ENCODE measurements at regions of chr5 and their contacts with region 1.

Region 1: DNA sequence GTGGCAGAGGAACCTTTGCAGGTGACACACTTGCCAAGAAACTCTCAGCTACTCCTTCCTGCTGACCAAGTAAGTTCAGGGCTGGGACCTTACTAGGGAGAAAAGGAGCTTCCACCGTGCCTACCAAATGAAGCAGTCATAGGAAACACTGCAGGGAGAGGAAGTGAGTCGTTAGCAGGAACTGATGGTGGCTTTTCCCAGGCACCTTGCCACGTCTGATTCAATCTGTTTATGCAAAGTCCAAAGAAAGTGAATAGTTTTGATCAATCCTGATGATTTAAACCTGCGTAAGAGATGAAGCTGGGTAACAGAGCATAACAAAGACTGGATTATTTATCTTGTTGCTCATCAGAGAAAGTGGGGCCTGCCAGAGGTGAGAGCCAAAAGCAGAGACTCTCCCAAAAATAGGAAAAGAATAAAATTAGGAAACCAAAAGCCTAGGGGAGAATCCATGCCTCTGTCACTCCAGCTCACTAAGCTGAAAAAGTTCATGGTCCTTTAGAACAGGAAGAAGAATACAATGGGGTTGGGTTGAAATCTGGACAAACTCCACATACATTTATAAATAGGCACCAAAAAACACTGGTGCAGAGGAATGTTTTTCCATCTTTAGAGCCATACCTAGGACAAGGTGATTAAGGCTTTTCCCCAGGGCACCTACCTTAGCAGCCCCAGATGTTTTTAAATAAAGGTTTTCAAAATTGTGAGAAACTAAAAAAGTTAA is 9.3 kb upstream of the PFDN1 start:
- DNase-seq: no peak
- H3K4me3 ChIP-seq: no peak overlapping the region
- H3K27ac ChIP-seq: peak overlapping the region; percentile 74
- H3K4me1 ChIP-seq: peaks cover 34% of the 10 kb centered on the region
- H3K27me3 ChIP-seq: no peaks in the 10 kb centered on the region
- CTCF ChIP-seq: no peak

Region 2: DNA sequence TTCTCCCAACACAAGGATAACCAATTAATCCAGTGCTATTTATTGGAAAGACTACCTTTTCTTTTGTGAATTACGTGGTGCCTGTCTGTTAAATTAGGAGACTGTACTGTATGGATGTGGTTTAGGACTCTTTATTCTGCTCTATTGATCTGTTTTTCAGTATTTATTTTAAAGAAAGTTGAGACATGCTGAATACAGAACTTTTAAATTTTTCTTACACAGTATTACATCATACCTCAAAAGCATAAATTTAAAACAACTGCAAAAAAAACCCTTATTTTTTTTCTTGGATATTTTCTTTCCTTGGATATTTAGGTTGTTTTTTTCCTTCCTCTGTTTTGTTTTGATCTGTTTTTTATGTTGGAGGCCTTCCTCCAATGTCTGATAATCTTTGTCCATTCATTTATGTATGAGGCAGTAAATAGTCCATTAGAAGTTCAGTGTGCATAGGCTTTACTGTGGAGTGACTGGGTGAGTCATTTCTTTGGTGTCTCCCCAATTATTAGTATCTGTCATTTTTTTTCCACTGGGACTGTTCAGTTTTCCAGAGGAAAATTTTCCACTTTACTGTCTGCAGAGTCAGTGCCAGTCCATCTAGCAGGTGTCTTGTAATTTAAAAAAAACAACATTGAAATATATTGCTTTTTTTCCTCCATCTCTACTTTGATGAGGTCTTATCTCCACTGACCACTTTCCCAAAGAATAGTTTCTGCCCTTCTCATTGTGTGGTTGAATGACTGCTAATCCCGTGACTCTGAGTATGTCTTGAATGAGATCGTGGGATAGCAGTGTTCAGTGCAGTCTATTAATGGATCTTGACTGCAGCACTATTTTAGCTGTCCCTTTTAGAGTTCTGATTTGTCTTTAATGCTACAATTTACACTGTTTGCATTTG is 122.0 kb before region 1 on chr5:
- dilution Hi-C with region 1: no loop called
- DNase-seq: no peak
- H3K4me3 ChIP-seq: no peak overlapping the region
- H3K27ac ChIP-seq: no peak overlapping the region
- H3K4me1 ChIP-seq: peaks cover 9% of the 10 kb centered on the region
- H3K27me3 ChIP-seq: no peaks in the 10 kb centered on the region
- CTCF ChIP-seq: no peak

Region 3: DNA sequence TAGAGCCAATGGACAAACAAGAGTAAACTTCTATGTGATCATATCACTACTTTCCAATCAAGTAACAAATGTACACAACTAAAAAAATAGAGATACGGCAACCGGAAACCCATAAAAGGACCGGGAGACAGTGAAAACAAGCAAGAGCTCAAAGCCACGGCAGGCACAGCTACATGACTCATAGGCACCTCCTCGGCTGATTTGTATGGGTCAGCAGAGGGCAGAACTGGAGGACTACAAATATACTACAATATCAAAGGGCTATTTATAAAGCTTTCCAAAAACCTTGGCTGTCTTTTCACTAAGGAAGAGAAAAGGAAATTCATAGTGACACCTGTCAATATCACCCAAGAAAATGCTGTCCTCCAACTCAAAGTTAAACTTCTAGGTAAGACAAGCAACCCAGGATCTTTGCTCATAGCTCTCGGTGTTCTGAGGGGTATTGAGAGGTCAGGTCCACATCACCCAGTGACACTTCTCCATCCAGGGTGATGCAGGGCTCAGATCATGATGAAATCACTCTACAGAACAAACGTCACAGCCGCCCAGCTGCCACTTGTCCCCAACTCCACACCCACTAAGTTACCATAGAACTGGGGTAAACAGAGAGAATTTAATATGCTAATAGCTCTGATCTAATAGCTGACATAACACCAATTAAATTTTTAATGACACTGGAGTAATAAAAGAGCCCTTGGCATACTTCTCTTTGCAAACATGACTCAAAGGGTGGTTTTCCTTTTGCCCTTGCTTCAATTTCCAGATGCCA is 50.6 kb before region 1 on chr5:
- dilution Hi-C with region 1: loop called (anchors 10 kb)
- DNase-seq: no peak
- H3K4me3 ChIP-seq: peak overlapping the region in 1 of 3 experiments; percentile 43
- H3K27ac ChIP-seq: peak overlapping the region; percentile 99
- H3K4me1 ChIP-seq: peaks cover 50% of the 10 kb centered on the region
- H3K27me3 ChIP-seq: no peaks in the 10 kb centered on the region
- CTCF ChIP-seq: peak in 2 of 3 experiments; percentile 9 to 36

Region 4: DNA sequence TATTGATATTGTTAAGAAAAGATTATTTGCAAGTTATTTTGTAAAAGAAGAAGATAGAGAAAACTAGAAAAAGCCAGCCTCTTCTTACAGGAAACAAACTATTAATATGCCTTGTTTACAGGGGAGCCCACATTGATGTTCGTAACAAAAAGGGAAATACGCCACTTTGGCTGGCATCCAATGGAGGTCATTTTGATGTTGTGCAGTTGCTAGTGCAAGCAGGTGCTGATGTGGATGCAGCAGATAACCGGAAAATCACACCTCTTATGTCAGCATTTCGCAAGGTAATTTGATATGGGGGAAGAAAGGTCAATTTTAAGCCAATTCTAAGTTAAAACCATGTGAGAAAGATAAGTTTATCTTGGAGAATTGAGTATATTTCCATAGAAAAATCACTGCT is 197.7 kb after region 1 on chr5:
- dilution Hi-C with region 1: no loop called
- DNase-seq: no peak
- H3K4me3 ChIP-seq: no peak overlapping the region
- H3K27ac ChIP-seq: no peak overlapping the region
- H3K4me1 ChIP-seq: no peaks in the 10 kb centered on the region
- H3K27me3 ChIP-seq: no peaks in the 10 kb centered on the region
- CTCF ChIP-seq: no peak

Region 5: GRCh38 chr5:140926443-140927227 is 614.4 kb after region 1 on chr5:
- dilution Hi-C with region 1: no loop called
- DNase-seq: no peak
- H3K4me3 ChIP-seq: peak overlapping the region; percentile 36 to 62 (median 55)
- H3K27ac ChIP-seq: no peak overlapping the region
- H3K4me1 ChIP-seq: peaks cover 3% of the 10 kb centered on the region
- H3K27me3 ChIP-seq: peaks cover 25% of the 10 kb centered on the region
- CTCF ChIP-seq: peak; percentile 42 to 94 (median 72)